ENCODE measurements at regions of chrX and their contacts with region 1.

Region 1: DNA sequence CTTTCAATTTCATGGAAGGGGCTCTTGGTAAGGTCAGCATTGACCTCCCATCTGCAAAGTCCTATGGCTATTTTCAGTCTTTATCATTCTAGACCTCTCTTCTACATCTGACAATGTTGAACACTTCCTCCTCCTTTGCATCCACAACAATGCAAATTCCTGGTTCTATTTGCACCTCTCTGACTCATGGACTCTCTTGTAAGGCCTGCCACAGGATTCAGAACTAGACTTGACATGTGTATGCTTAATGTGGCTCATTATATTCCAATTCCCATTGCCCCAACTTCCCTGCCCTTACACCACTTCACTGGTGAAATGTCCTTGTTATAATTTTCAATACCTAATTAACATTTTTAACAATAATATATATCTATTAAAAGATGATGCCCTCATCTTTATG is 314.3 kb upstream of the FGF13 start:
- DNase-seq: no peak
- H3K4me3 ChIP-seq: no peak overlapping the region
- H3K27ac ChIP-seq: no peak overlapping the region
- H3K4me1 ChIP-seq: no peaks in the 10 kb centered on the region
- H3K27me3 ChIP-seq: no peaks in the 10 kb centered on the region
- CTCF ChIP-seq: no peak
- POLR2A ChIP-seq: no peak

Region 2: GRCh38 chrX:139639253-139639652 is 613.4 kb after region 1 on chrX:
- intact Hi-C with region 1: loop called (anchors 5 kb)
- DNase-seq: no peak
- H3K4me3 ChIP-seq: no peak overlapping the region
- H3K27ac ChIP-seq: no peak overlapping the region
- H3K4me1 ChIP-seq: peaks cover 4% of the 10 kb centered on the region
- H3K27me3 ChIP-seq: no peaks in the 10 kb centered on the region
- CTCF ChIP-seq: no peak
- POLR2A ChIP-seq: no peak